CD4-positive, alpha-beta T cell (primary cell): ENCODE measurements at regions of chr2 and their contacts with region 1.

Region 1: DNA sequence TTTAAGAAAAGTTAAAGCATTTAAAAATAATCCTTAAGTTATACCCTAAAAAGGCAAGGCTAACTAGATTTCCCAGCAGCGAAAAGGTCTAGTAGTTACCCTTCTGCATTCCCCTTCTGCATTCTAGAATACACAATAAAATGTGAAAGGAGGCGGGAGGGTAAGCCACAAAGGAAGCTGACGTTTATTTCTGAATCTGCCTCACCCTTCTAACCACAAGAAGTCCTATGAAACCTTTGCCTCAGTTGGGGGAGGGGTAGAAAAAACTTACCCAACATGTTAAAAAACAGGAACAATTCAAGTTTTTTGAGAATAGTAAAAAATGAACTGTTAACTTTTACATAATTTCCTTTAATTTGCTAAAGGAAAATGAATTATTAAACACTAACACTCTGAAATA is 11.3 kb downstream of the STK17B start:
- DNase-seq: peak in 9 of 14 experiments; percentile 21 to 94 (median 58)
- ATAC-seq: peak; percentile 54
- H3K4me3 ChIP-seq: peak overlapping the region; percentile 91
- H3K4me3 Mint-ChIP-seq: peak overlapping the region; percentile 86
- H3K27ac ChIP-seq: peak overlapping the region; percentile 80 to 88
- H3K27ac Mint-ChIP-seq: peak overlapping the region; percentile 85
- H3K4me1 ChIP-seq: peaks cover 32% of the 10 kb centered on the region
- H3K4me1 Mint-ChIP-seq: peaks cover 92% of the 10 kb centered on the region
- H3K27me3 ChIP-seq: no peaks in the 10 kb centered on the region
- H3K27me3 Mint-ChIP-seq: no peaks in the 10 kb centered on the region
- CTCF ChIP-seq: no peak

Region 2: GRCh38 chr2:196088203-196088602 is 71.9 kb before region 1 on chr2:
- CTCF ChIA-PET with region 1: no interaction called
- POLR2A ChIA-PET with region 1: no interaction called
- intact Hi-C with region 1: no loop called
- DNase-seq: no peak
- ATAC-seq: no peak
- H3K4me3 ChIP-seq: no peak overlapping the region
- H3K4me3 Mint-ChIP-seq: no peak overlapping the region
- H3K27ac ChIP-seq: no peak overlapping the region
- H3K27ac Mint-ChIP-seq: no peak overlapping the region
- H3K4me1 ChIP-seq: peaks cover 16% of the 10 kb centered on the region
- H3K4me1 Mint-ChIP-seq: peaks cover 17% of the 10 kb centered on the region
- H3K27me3 ChIP-seq: no peaks in the 10 kb centered on the region
- H3K27me3 Mint-ChIP-seq: no peaks in the 10 kb centered on the region
- CTCF ChIP-seq: no peak

Region 3: GRCh38 chr2:196143730-196144131 is 16.4 kb before region 1 on chr2:
- CTCF ChIA-PET with region 1: interaction called, 4 read pairs
- POLR2A ChIA-PET with region 1: interaction called, 82 read pairs
- intact Hi-C with region 1: loop called in 1 of 2 experiments (anchors 2 kb)
- DNase-seq: no peak
- ATAC-seq: no peak
- H3K4me3 ChIP-seq: no peak overlapping the region
- H3K4me3 Mint-ChIP-seq: peak overlapping the region; percentile 56
- H3K27ac ChIP-seq: peak overlapping the region; percentile 9 to 23
- H3K27ac Mint-ChIP-seq: peak overlapping the region; percentile 77
- H3K4me1 ChIP-seq: peaks cover 44% of the 10 kb centered on the region
- H3K4me1 Mint-ChIP-seq: peaks cover 83% of the 10 kb centered on the region
- H3K27me3 ChIP-seq: no peaks in the 10 kb centered on the region
- H3K27me3 Mint-ChIP-seq: no peaks in the 10 kb centered on the region
- CTCF ChIP-seq: no peak

Region 4: GRCh38 chr2:196182439-196183171 is 22.5 kb after region 1 on chr2:
- CTCF ChIA-PET with region 1: no interaction called
- POLR2A ChIA-PET with region 1: interaction called, 86 read pairs
- intact Hi-C with region 1: no loop called
- DNase-seq: peak in 2 of 14 experiments; percentile 60 to 74
- ATAC-seq: no peak
- H3K4me3 ChIP-seq: no peak overlapping the region
- H3K4me3 Mint-ChIP-seq: peak overlapping the region; percentile 76
- H3K27ac ChIP-seq: peak overlapping the region; percentile 68 to 79
- H3K27ac Mint-ChIP-seq: peak overlapping the region; percentile 94
- H3K4me1 ChIP-seq: peaks cover 76% of the 10 kb centered on the region
- H3K4me1 Mint-ChIP-seq: peaks cover 94% of the 10 kb centered on the region
- H3K27me3 ChIP-seq: no peaks in the 10 kb centered on the region
- H3K27me3 Mint-ChIP-seq: no peaks in the 10 kb centered on the region
- CTCF ChIP-seq: no peak

Region 5: GRCh38 chr2:196205881-196206435 is 45.9 kb after region 1 on chr2:
- CTCF ChIA-PET with region 1: interaction called, 3 read pairs
- POLR2A ChIA-PET with region 1: interaction called, 29 read pairs
- intact Hi-C with region 1: loop called in 1 of 2 experiments (anchors 2 kb)
- DNase-seq: no peak
- ATAC-seq: no peak
- H3K4me3 ChIP-seq: no peak overlapping the region
- H3K4me3 Mint-ChIP-seq: no peak overlapping the region
- H3K27ac ChIP-seq: no peak overlapping the region
- H3K27ac Mint-ChIP-seq: peak overlapping the region; percentile 43
- H3K4me1 ChIP-seq: peaks cover 34% of the 10 kb centered on the region
- H3K4me1 Mint-ChIP-seq: peaks cover 45% of the 10 kb centered on the region
- H3K27me3 ChIP-seq: no peaks in the 10 kb centered on the region
- H3K27me3 Mint-ChIP-seq: no peaks in the 10 kb centered on the region
- CTCF ChIP-seq: no peak

Region 6: GRCh38 chr2:196233021-196233804 is 73.1 kb after region 1 on chr2:
- CTCF ChIA-PET with region 1: no interaction called
- POLR2A ChIA-PET with region 1: interaction called, 24 read pairs
- intact Hi-C with region 1: no loop called
- DNase-seq: peak in 1 of 14 experiments; percentile 40
- ATAC-seq: no peak
- H3K4me3 ChIP-seq: no peak overlapping the region
- H3K4me3 Mint-ChIP-seq: peak overlapping the region; percentile 23
- H3K27ac ChIP-seq: peak overlapping the region; percentile 19 to 63
- H3K27ac Mint-ChIP-seq: peak overlapping the region; percentile 97
- H3K4me1 ChIP-seq: peaks cover 58% of the 10 kb centered on the region
- H3K4me1 Mint-ChIP-seq: peaks cover 94% of the 10 kb centered on the region
- H3K27me3 ChIP-seq: no peaks in the 10 kb centered on the region
- H3K27me3 Mint-ChIP-seq: no peaks in the 10 kb centered on the region
- CTCF ChIP-seq: no peak

Region 7: GRCh38 chr2:196263181-196263747 is 103.2 kb after region 1 on chr2:
- CTCF ChIA-PET with region 1: interaction called, 3 read pairs
- POLR2A ChIA-PET with region 1: interaction called, 79 read pairs
- intact Hi-C with region 1: loop called in 1 of 2 experiments (anchors 5 kb)
- DNase-seq: peak in 11 of 14 experiments; percentile 14 to 87 (median 42)
- ATAC-seq: peak; percentile 79
- H3K4me3 ChIP-seq: peak overlapping the region; percentile 28
- H3K4me3 Mint-ChIP-seq: peak overlapping the region; percentile 43
- H3K27ac ChIP-seq: peak overlapping the region; percentile 79 to 85
- H3K27ac Mint-ChIP-seq: peak overlapping the region; percentile 84
- H3K4me1 ChIP-seq: peaks cover 48% of the 10 kb centered on the region
- H3K4me1 Mint-ChIP-seq: peaks cover 88% of the 10 kb centered on the region
- H3K27me3 ChIP-seq: no peaks in the 10 kb centered on the region
- H3K27me3 Mint-ChIP-seq: no peaks in the 10 kb centered on the region
- CTCF ChIP-seq: no peak

Region 8: DNA sequence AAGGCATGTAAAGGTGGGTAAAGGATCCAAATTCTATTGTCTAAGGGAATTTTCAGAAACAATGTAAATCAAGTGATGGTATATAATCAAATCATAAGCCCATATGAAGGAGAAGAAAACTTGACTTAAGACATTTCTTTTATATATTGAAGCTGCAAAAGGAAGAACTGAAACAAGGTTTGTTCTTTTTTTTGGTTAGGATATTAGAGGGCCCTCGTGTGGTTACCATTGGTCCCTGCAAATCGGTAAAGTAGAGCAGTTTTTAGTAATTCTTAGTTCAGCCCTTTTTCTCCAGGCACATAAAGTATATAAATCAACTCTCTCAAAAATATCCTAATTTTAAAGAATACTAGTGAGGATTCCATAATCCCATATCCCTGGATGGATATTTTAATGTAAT is 116.9 kb after region 1 on chr2:
- CTCF ChIA-PET with region 1: interaction called, 14 read pairs
- POLR2A ChIA-PET with region 1: interaction called, 29 read pairs
- intact Hi-C with region 1: loop called (anchors 5 kb)
- DNase-seq: peak in 7 of 14 experiments; percentile 9 to 79 (median 46)
- ATAC-seq: peak; percentile 59
- H3K4me3 ChIP-seq: no peak overlapping the region
- H3K4me3 Mint-ChIP-seq: peak overlapping the region; percentile 11
- H3K27ac ChIP-seq: no peak overlapping the region
- H3K27ac Mint-ChIP-seq: peak overlapping the region; percentile 79
- H3K4me1 ChIP-seq: peaks cover 25% of the 10 kb centered on the region
- H3K4me1 Mint-ChIP-seq: peaks cover 70% of the 10 kb centered on the region
- H3K27me3 ChIP-seq: no peaks in the 10 kb centered on the region
- H3K27me3 Mint-ChIP-seq: no peaks in the 10 kb centered on the region
- CTCF ChIP-seq: peak; percentile 81